ENCODE measurements at regions of chr2 and their contacts with region 1.

Region 1: GRCh38 chr2:127857265-127857808 is 618 bp downstream of the POLR2D start:
- DNase-seq: no peak
- ATAC-seq: peak; percentile 3; the same call in 1 of the 2 replicates
- H3K4me3 ChIP-seq: peak overlapping the region; percentile 90
- H3K27ac ChIP-seq: peak overlapping the region; percentile 32
- H3K4me1 ChIP-seq: peaks cover 14% of the 10 kb centered on the region
- H3K27me3 ChIP-seq: no peaks in the 10 kb centered on the region
- CTCF ChIP-seq: no peak

Region 2: GRCh38 chr2:127700527-127701192 is 156.7 kb before region 1 on chr2:
- CTCF ChIA-PET with region 1: no interaction called
- POLR2A ChIA-PET with region 1: no interaction called
- intact Hi-C with region 1: loop called (anchors 1 kb)
- DNase-seq: peak; percentile 95
- ATAC-seq: peak; percentile 57
- H3K4me3 ChIP-seq: peak overlapping the region; percentile 73
- H3K27ac ChIP-seq: peak overlapping the region; percentile 95
- H3K4me1 ChIP-seq: peaks cover 47% of the 10 kb centered on the region
- H3K27me3 ChIP-seq: no peaks in the 10 kb centered on the region
- CTCF ChIP-seq: peak; percentile 10; the same call in 1 of the 2 replicates

Region 3: GRCh38 chr2:127770973-127771735 is 86.2 kb before region 1 on chr2:
- CTCF ChIA-PET with region 1: no interaction called
- POLR2A ChIA-PET with region 1: no interaction called
- intact Hi-C with region 1: loop called (anchors 10 kb)
- DNase-seq: peak; percentile 83
- ATAC-seq: peak; percentile 94
- H3K4me3 ChIP-seq: no peak overlapping the region
- H3K27ac ChIP-seq: peak overlapping the region; percentile 80
- H3K4me1 ChIP-seq: peaks cover 20% of the 10 kb centered on the region
- H3K27me3 ChIP-seq: no peaks in the 10 kb centered on the region
- CTCF ChIP-seq: no peak

Measured in PC-3 (cell line).